BJ (cell line): ENCODE measurements at regions of chr1 and their contacts with region 1.

Region 1: DNA sequence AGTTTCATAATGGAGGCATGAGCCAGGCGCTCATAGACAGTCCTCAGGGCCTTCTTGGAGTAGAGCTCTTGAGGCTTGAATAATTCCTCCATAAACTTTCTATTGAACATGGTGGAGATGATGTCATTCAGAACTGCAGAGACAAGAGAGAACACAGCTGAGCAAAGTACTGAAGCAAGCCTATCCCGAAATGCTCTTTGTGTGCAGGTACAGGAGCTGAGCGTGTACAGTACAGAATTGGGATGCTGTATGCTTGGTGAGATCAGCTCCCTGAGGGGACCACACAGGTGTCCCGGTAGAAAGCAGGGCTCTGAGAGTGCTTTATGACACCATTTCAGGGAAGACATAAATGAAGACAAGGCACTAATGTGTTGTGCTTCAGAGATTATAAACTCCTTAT is 11.5 kb downstream of the OSCP1 start:
- DNase-seq: no peak
- H3K4me3 ChIP-seq: no peak overlapping the region
- H3K27me3 ChIP-seq: no peaks in the 10 kb centered on the region
- CTCF ChIP-seq: no peak

Region 2: GRCh38 chr1:36450270-36450918 is 11.6 kb after region 1 on chr1 and contains the start of gene OSCP1:
- CTCF ChIA-PET with region 1: interaction called, 4 read pairs
- POLR2A ChIA-PET with region 1: interaction called, 12 read pairs
- DNase-seq: peak; percentile 76
- H3K4me3 ChIP-seq: peak within 1 kb of the TSS; percentile 70
- H3K27me3 ChIP-seq: no peaks in the 10 kb centered on the region
- CTCF ChIP-seq: no peak
- polyA plus RNA-seq, gene OSCP1: 9.6 and 11.5 TPM in 2 replicates